Lower leg skin (tissue), 4 donors: ENCODE measurements at regions of chr6 and their contacts with region 1.

Region 1: DNA sequence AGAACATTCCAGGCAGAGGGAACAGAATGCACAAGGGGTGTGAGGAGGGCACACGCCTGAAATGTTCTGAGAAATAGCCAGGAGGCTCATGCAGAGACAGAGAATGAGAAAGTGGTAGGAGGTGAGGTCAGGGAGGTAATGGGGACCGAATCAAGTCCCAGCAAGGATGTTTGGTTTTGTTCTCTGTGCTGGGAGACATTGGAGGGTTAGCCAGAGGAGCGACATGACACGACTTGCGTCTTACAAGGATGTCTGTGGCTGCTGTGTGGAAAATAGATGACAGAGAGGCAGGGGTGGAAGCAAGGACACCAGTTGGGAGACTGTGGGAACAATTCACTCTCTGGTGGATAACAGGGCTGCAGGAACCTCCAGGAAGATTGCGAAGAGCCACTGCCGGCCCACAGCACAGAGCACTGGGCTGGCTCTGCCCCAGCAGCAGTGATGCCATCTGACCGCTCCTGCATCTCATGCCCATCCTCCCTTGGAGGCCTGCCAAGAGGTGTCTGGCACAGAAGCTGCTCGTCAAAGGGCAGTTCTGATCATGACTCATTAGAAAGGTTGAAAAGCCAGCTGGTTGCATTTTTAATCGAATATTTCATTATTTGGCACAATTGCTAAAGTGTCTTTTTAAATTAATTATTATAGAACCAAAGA is 57.7 kb upstream of the CD83 start:
- DNase-seq: no peak
- H3K4me3 ChIP-seq: no peak overlapping the region
- CTCF ChIP-seq: no peak
- POLR2A ChIP-seq: no peak

Region 2: GRCh38 chr6:12865671-12866181 is 1194.2 kb before region 1 on chr6:
- intact Hi-C with region 1: no loop called
- DNase-seq: no peak
- H3K4me3 ChIP-seq: no peak overlapping the region
- CTCF ChIP-seq: no peak
- POLR2A ChIP-seq: no peak

Region 3: DNA sequence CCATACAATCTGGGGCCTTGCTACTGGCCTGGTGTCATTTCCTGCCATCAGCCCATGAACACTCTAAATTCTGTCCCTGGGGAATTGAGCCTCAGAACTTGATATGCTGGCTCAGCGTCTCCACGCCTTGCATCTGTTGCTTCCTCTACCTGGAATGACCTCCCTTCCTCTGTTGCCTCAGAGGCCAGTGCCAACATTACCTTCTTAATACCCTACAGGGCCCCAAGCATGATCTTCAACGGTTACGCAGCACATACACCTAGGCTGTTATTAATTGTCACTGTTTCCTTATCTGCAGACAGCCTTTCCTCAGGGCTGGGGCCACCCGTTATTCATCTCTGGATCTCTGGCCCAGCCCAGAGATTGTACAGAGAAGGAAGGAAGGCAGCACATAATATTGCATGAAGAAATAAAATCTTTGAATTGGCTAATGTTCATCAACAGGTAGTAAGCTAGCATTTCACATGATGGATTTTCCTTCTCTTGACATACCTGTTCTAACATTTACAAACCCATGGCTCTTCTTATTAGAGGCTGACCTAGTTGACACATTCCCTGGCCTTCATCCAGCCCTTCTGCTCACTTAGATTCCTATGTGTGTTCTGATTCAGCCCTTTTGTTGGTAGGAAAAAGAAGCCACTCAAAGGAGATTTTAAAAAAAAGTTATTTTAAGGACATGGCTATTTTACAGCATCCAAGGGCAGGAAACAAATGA is 143.5 kb before region 1 on chr6:
- intact Hi-C with region 1: loop called (anchors 10 kb)
- DNase-seq: no peak
- H3K4me3 ChIP-seq: no peak overlapping the region
- CTCF ChIP-seq: no peak
- POLR2A ChIP-seq: no peak